HEK293 (cell line): ENCODE measurements at regions of chr16 and their contacts with region 1.

Region 1: GRCh38 chr16:57413301-57413730 is 8.7 kb downstream of the CCL17 start:
- H3K4me3 ChIP-seq: no peak overlapping the region
- H3K27ac ChIP-seq: no peak overlapping the region
- H3K4me1 ChIP-seq: no peaks in the 10 kb centered on the region
- CTCF ChIP-seq: no peak

Region 2: GRCh38 chr16:57300387-57301125 is 112.8 kb before region 1 on chr16:
- CTCF ChIA-PET with region 1: interaction called, 290 read pairs
- POLR2A ChIA-PET with region 1: interaction called, 7 read pairs
- H3K4me3 ChIP-seq: peak overlapping the region; percentile 38
- H3K27ac ChIP-seq: no peak overlapping the region
- H3K4me1 ChIP-seq: no peaks in the 10 kb centered on the region
- CTCF ChIP-seq: peak; percentile 99

Region 3: GRCh38 chr16:57316390-57317017 is 96.8 kb before region 1 on chr16:
- CTCF ChIA-PET with region 1: interaction called, 16 read pairs
- POLR2A ChIA-PET with region 1: no interaction called
- H3K4me3 ChIP-seq: no peak overlapping the region
- H3K27ac ChIP-seq: no peak overlapping the region
- H3K4me1 ChIP-seq: no peaks in the 10 kb centered on the region
- CTCF ChIP-seq: no peak

Region 4: GRCh38 chr16:57394444-57394843 is 18.9 kb before region 1 on chr16:
- CTCF ChIA-PET with region 1: interaction called, 11 read pairs
- POLR2A ChIA-PET with region 1: interaction called, 3 read pairs
- H3K4me3 ChIP-seq: no peak overlapping the region
- H3K27ac ChIP-seq: no peak overlapping the region
- H3K4me1 ChIP-seq: no peaks in the 10 kb centered on the region
- CTCF ChIP-seq: no peak

Region 5: DNA sequence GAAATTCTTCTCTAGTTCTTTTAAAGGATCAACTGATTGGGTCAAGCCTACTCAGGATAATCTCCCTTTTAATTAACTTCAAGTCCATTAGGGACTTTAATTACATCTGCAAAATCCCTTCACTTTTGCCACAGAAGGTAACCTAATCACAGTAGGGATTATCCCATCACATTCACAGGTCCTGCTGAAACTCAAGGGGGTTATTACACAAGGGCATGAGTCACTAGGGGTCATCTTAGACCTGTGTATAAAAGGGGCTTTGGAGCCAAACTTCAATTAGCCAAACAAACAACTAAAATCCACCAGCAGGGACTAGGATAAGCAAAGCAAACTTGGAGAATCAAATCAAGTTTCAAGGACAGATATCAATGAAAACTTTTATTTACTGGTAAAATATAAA is 14.5 kb after region 1 on chr16:
- CTCF ChIA-PET with region 1: interaction called, 16 read pairs
- POLR2A ChIA-PET with region 1: no interaction called
- H3K4me3 ChIP-seq: no peak overlapping the region
- H3K27ac ChIP-seq: no peak overlapping the region
- H3K4me1 ChIP-seq: no peaks in the 10 kb centered on the region
- CTCF ChIP-seq: no peak

Region 6: DNA sequence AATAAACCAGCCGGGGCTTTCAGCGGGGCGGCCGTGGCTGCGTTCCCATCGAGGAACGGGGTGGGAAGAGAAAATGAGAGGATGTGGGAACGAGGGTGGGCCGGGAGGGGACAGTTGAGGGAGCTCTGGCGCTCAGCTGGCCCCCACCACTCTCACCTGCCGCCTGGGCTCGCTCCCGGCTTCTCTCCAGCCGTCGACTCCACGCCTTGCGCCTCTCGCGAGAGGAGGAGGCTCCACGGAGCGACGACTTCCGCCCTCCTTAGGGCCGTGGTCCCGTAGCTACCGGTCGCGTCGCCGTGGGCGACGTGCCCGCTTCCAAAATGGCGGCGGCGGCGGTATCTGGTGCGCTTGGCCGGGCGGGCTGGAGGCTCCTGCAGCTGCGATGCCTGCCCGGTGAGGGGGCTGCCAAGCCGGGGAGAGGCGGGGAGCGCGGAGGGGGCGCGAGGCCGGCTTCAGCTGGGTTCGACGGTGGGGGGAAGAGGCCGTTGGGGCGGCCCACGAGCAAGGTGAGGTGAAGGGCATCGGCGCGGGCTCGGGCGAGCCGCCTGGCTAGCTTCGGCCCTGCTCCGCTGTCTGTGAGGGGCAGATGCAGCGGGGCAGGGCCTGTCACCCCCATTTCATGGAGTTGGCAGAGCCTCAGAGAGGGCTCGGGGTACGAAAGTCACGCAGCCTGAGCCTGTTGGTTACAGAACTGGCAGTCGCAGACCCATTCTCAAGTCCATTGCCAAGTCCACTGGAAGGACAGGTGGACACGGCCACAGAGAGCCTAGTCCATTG is 34.1 kb after region 1 on chr16 and contains the starts of genes CIAPIN1 and COQ9:
- CTCF ChIA-PET with region 1: interaction called, 17 read pairs
- POLR2A ChIA-PET with region 1: interaction called, 4 read pairs
- H3K4me3 ChIP-seq: peak within 1 kb of the TSS; percentile 95
- H3K27ac ChIP-seq: peak within 1 kb of the TSS; percentile 77
- H3K4me1 ChIP-seq: no peaks in the 10 kb centered on the region
- CTCF ChIP-seq: no peak

Region 7: GRCh38 chr16:57544119-57544653 is 130.9 kb after region 1 on chr16:
- CTCF ChIA-PET with region 1: no interaction called
- POLR2A ChIA-PET with region 1: no interaction called
- H3K4me3 ChIP-seq: no peak overlapping the region
- H3K27ac ChIP-seq: no peak overlapping the region
- H3K4me1 ChIP-seq: no peaks in the 10 kb centered on the region
- CTCF ChIP-seq: no peak